A549 (cell line): ENCODE measurements at regions of chr19 and their contacts with region 1.

Region 1: DNA sequence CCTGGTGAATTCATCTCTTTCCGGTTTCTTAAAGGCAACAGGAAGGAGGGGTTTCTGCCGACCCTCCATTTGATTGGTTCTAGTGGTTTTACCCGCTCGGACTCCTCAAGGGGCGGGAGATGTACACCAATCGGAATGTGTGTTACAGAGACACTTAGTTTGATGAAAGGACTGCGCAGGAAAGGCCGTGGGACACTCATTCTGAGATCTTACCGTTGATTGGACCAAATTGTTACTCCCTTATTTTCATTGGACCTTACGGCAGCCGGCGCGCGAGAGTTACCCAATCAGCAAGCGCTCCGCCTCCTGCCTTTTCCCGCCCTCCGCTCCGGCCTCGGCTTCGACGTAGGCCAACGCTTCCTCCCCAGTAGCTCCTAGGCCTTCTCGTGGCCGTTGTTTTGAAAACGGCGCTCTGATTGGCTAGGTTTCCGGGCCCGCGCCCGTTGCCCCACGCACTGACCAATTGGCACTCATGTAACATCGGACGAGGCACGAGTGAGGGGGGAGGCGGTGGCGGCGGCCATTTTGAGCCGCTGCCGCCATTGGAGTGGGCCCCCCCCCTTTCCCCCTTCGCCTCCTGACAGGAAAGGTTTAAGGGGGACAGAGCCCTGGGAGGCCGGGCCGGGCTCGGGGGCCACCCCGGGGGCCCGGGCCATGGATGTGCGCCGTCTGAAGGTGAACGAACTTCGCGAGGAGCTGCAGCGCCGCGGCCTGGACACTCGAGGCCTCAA is at the start of gene HNRNPUL1:
- DNase-seq: peak; percentile 100
- ATAC-seq: peak; percentile 71 to 80
- H3K4me3 ChIP-seq: peak within 1 kb of the TSS; percentile 88
- H3K27ac ChIP-seq: peak within 1 kb of the TSS; percentile 96 to 99
- H3K4me1 ChIP-seq: peaks cover 26% of the 10 kb centered on the region
- CTCF ChIP-seq: peak; percentile 44
- EP300 ChIP-seq: no peak
- POLR2A ChIP-seq: peak; percentile 29
- RAD21 ChIP-seq: no peak
- polyA plus RNA-seq, gene HNRNPUL1: 89.5 and 117 TPM in 2 replicates

Region 2: DNA sequence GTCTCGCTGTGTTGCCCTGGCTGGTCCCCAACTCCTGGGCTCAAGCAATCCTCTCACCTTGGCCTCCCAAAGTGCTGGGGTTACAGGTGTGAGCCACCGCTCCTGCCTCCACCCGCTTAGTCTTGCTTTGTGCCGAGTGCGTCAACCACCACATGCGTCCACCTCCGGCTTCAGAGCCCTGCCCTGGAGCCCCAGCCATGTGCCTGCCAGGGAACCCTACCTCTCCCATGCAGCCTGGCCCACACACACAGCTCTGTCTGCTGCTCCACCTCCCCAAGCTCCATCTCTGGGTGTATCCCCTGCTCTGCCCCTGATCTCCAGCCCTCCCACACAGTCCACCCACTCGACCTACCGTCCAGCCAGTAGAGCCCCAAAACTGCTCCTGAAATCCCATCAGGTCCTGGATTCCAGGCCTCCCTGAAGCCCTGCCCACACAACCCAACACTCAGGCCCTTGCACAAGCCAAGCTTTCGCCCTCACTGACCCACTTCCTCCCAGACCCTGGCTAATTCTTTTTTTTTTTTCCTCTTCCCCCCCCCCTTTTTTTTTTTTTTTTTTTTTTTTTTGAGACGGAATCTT is 140.2 kb before region 1 on chr19:
- CTCF ChIA-PET with region 1: interaction called, 31 read pairs
- POLR2A ChIA-PET with region 1: interaction called, 4 read pairs
- DNase-seq: no peak
- ATAC-seq: no peak
- H3K4me3 ChIP-seq: no peak overlapping the region
- H3K27ac ChIP-seq: no peak overlapping the region
- H3K4me1 ChIP-seq: peaks cover 10% of the 10 kb centered on the region
- CTCF ChIP-seq: no peak
- EP300 ChIP-seq: no peak
- POLR2A ChIP-seq: no peak
- RAD21 ChIP-seq: no peak

Region 3: DNA sequence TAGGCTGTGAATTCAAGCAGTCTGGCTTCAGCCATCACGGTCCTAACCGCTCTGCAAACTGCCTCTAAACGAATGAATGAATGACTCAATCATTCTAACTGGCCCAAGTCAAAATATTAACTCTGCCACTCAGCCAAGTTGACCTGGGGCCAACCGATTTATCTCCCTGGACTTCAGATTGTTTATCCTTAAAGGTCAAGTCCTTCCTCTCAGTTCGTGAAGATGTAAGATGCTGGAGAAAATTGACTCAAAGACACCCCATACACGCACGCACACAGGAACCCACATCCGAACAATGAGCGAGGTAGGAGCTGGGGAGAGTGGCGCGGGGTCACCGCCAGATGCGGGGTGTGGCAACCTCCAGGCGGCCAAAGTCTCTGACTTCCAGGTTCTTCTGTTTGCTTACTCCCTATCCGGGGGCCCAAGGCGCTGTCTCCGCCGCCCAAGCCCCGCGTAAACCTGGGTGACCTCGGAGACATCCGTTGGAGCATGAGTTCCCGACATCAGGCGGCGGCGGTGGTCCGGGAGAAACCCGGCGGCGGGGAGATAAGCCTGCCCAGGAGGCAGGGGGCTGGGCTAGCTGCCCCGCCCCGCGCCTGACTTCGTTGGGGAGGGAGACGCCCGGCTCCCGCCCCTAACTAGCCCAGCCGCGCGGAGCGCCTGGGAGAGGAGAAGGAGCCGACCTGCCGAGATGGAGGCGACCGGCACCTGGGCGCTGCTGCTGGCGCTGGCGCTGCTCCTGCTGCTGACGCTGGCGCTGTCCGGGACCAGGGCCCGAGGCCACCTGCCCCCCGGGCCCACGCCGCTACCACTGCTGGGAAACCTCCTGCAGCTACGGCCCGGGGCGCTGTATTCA is 71.2 kb before region 1 on chr19 and contains the start of gene CYP2S1:
- CTCF ChIA-PET with region 1: interaction called, 1,023 read pairs
- POLR2A ChIA-PET with region 1: interaction called, 12 read pairs
- DNase-seq: peak; percentile 77 to 93
- ATAC-seq: peak; percentile 73 to 91
- H3K4me3 ChIP-seq: peak within 1 kb of the TSS; percentile 55
- H3K27ac ChIP-seq: peak within 1 kb of the TSS; percentile 66 to 87
- H3K4me1 ChIP-seq: peaks cover 37% of the 10 kb centered on the region
- CTCF ChIP-seq: 0 out of 3 replicates have a peak, but pooled peaks have one; percentile 11
- EP300 ChIP-seq: no peak
- POLR2A ChIP-seq: peak; percentile 90
- RAD21 ChIP-seq: peak in 1 of 2 experiments; percentile 41; a peak in 3 of 5 replicates
- polyA plus RNA-seq, gene CYP2S1: 8.6 and 19.7 TPM in 2 replicates

Region 4: DNA sequence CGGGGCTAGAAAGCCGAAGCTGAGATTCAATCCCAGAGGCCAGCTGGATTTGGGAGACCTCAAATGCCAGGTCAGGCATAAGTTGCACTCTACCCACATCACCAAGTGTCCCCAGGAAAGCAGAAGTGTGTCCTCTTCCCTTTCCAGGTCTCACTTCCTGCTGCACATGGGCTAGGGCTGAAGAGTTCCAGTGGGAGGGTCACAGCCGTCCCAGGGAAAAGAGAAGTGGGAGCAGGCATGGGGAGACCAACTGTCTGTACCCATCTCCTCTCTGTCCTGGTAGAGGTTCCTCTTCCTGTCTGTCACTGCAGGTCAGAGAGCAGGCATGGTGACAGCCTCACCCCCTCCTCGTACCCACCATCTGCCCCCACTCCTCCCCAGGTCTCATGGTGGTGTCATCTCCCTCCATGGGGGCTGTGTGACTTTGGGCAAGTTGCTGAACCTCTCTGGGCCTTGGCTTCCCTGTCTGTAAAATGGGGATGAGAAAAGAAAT is 30.2 kb before region 1 on chr19:
- CTCF ChIA-PET with region 1: interaction called, 119 read pairs
- POLR2A ChIA-PET with region 1: interaction called, 4 read pairs
- DNase-seq: no peak
- ATAC-seq: no peak
- H3K4me3 ChIP-seq: no peak overlapping the region
- H3K27ac ChIP-seq: peak overlapping the region in 1 of 2 experiments; percentile 5; a peak in 1 of 6 replicates
- H3K4me1 ChIP-seq: peaks cover 6% of the 10 kb centered on the region; the same call in 2 of the 3 replicates
- CTCF ChIP-seq: no peak
- EP300 ChIP-seq: no peak
- POLR2A ChIP-seq: no peak
- RAD21 ChIP-seq: no peak

Region 5: DNA sequence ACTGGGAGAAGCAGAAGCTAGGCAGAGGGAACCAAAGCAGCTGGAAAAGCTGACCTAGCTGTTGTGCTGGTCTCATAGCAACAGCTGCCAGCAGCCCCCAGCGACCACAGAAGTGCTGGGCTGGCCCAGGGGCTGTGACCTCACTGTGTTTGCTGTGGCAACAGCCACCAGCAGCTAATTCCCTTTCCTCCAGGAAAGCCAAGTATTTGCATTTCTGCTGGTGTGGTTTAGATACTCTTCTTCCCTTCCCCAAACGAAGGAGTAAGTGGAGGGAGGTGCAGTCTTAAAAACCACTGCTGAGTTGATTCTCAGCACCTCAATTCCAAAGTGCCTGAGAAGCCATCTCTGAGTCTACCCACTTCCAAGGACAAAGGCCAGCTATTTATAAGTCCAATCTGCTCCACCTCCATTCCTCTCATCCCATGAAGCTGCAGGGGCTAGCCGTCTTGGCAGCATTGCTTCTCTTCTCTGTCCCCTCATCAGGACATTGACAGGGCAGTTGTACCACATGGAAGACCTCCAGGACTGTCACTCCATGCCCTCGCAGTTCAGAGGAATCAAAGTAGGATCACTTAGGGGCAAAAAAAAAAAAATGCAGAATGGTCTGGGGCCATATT is 34.4 kb after region 1 on chr19:
- CTCF ChIA-PET with region 1: interaction called, 183 read pairs
- POLR2A ChIA-PET with region 1: interaction called, 4 read pairs
- DNase-seq: no peak
- ATAC-seq: peak; percentile 28 to 54; a peak in 4 of 6 replicates
- H3K4me3 ChIP-seq: no peak overlapping the region
- H3K27ac ChIP-seq: no peak overlapping the region
- H3K4me1 ChIP-seq: no peaks in the 10 kb centered on the region
- CTCF ChIP-seq: no peak
- EP300 ChIP-seq: no peak
- POLR2A ChIP-seq: no peak
- RAD21 ChIP-seq: no peak

Region 6: DNA sequence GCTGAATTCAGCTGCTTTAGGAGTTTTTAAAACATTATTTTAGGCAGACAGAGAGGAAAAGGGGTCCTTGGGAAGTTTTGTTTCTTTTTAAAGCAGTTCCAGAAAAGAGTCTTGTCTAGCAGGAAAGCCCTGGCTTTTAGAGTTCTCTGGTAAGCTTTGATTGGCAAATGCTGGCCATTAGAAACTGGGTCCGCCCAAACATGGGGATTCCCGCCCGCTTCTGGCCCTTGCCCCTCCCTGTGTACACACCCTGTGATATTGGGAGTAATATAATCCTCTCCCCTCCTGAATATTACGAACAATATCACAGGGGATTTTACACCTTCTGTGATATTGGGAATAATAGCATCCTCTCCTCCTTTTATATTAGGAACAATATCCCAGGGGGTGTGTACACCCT is 237.8 kb after region 1 on chr19:
- CTCF ChIA-PET with region 1: no interaction called
- POLR2A ChIA-PET with region 1: interaction called, 10 read pairs
- DNase-seq: peak in 1 of 2 experiments; percentile 53
- ATAC-seq: peak; percentile 36 to 60; a peak in 4 of 6 replicates
- H3K4me3 ChIP-seq: peak overlapping the region; percentile 35
- H3K27ac ChIP-seq: peak overlapping the region; percentile 66 to 82
- H3K4me1 ChIP-seq: peaks cover 15% of the 10 kb centered on the region
- CTCF ChIP-seq: no peak
- EP300 ChIP-seq: no peak
- POLR2A ChIP-seq: no peak
- RAD21 ChIP-seq: no peak